ENCODE measurements at regions of chr2 and their contacts with region 1.

Region 1: GRCh38 chr2:176096986-176097819 is 2.4 kb upstream of the HOXD12 start:
- DNase-seq: peak; percentile 65 to 74 (median 71)
- H3K4me3 ChIP-seq: peak overlapping the region in 6 of 7 experiments; percentile 27 to 57 (median 52)
- H3K27ac ChIP-seq: no peak overlapping the region
- H3K4me1 ChIP-seq: peaks cover 7 to 23% (median 19%) of the 10 kb centered on the region in 4 experiments
- H3K27me3 ChIP-seq: peaks cover 34 to 99% (median 78%) of the 10 kb centered on the region in 5 experiments

Region 2: DNA sequence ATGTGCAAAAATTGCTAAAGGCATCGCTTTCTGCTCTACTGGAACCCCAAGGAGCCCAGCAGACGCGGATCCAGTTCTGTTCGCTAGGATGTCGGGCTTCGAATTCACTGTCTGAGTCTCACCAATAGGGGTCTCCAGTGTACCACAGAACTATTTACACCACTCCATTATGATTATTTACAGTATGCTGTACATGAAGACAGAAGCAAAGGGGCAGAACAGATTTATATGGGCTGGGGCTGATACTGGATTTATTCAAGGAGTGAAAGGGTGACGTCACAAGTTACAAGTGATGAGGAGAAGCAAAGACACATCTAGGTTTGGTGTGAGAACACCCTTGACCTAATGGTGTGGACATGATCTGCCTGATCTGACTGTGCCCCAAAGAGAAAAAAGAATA is 730.4 kb before region 1 on chr2:
- CTCF ChIA-PET with region 1: interaction called, 19 read pairs
- POLR2A ChIA-PET with region 1: no interaction called
- DNase-seq: peak; percentile 65 to 84 (median 81)
- H3K4me3 ChIP-seq: no peak overlapping the region
- H3K27ac ChIP-seq: no peak overlapping the region
- H3K4me1 ChIP-seq: peaks cover 2 to 11% (median 7%) of the 10 kb centered on the region in 4 experiments
- H3K27me3 ChIP-seq: peaks cover 3 to 52% (median 25%) of the 10 kb centered on the region in 5 experiments

Region 3: DNA sequence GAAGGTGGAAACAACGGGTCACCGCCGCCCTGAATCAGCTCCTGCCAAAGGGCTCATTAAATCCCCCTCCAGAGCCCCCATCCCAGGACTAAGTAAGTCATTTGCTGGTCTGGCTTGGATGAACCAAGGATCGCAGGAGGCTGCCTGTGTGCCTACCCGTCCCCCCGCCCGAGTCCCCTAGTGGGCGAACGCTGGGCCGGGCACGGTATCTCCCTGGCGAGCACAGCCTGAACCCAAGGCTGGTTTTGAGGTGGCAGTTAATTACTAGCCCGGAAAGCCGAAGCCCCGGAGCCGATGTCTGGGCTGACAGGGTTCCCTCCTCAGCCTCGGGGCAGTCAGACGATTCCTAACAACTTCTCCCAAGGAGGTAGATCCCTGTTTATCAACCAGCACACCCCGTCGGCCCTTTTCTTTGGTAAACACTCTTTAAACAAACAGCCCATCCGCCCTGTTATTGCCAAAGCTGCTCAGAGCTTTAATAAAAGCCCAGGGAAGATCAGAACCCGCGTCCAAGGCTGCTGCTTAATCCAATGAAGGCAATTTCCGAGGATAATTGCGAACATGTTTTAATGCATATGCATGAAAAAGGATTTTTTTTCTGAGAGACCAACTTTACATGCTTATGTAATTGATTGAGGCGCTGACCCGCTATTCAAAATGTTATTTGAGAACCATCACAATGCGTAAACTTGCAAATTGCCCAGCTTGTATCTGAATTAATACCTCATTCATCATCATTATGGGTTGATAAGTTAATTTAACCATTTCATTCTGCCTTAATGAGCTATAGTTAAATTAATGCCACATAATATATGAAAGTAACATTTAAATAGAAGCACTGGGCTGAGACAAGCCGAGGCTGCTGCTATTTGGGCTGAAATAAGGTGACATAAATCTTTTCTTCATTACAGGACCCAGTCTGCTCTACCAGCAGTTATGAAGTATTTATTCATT is 24.0 kb before region 1 on chr2:
- CTCF ChIA-PET with region 1: interaction called, 20 read pairs
- POLR2A ChIA-PET with region 1: interaction called, 3 read pairs
- DNase-seq: peak in 1 of 3 donors; percentile 25
- H3K4me3 ChIP-seq: no peak overlapping the region
- H3K27ac ChIP-seq: no peak overlapping the region
- H3K4me1 ChIP-seq: peaks cover 0 to 5% (median 2%) of the 10 kb centered on the region in 4 experiments
- H3K27me3 ChIP-seq: peaks cover 33 to 97% (median 70%) of the 10 kb centered on the region in 5 experiments

Region 4: DNA sequence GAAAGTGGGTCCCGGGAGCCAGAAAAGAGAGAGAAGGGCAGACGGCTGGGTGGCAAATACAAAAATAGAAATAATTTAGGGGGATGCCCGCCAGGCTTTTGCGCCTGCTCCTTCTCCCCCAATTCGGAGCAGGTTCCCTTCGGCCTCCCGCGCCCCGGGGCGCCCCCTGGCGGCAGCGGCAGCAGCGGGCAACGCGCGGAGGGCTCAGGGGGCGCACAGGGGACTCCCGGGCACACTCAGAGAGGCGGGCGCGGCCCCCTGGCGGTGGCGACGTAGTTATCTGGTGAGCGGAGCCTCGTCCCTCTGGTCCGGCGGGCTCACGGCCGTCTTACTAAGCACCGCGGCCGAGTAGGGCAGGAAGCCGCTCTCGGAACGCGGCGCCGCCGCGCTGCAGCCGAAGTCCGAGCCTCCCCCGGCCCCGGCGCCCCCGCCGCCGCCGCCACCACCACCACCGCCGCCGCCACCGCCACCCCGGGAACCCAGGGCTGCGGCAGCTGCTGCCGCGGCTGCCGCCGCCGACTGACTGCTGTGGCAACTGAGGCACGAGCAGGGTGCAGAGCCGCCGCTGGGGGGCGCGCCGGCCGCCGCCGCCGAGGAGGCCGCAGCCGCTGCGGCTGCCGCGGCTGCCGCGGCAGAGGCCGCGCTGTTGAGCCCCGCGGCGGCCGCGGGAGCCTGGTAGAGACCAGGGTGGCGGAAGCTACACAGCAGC is 17.2 kb before region 1 on chr2:
- CTCF ChIA-PET with region 1: interaction called, 20 read pairs
- POLR2A ChIA-PET with region 1: interaction called, 3 read pairs
- DNase-seq: peak; percentile 72 to 80 (median 78)
- H3K4me3 ChIP-seq: peak overlapping the region in 2 of 7 experiments; percentile 4 to 40
- H3K27ac ChIP-seq: no peak overlapping the region
- H3K4me1 ChIP-seq: peaks cover 0 to 15% (median 9%) of the 10 kb centered on the region in 4 experiments
- H3K27me3 ChIP-seq: peaks cover 47 to 96% (median 74%) of the 10 kb centered on the region in 5 experiments

Region 5: GRCh38 chr2:176110975-176111663 is 13.9 kb after region 1 on chr2:
- CTCF ChIA-PET with region 1: interaction called, 27 read pairs
- POLR2A ChIA-PET with region 1: interaction called, 4 read pairs
- DNase-seq: peak; percentile 62 to 66 (median 65)
- H3K4me3 ChIP-seq: no peak overlapping the region
- H3K27ac ChIP-seq: no peak overlapping the region
- H3K4me1 ChIP-seq: peaks cover 0 to 10% (median 6%) of the 10 kb centered on the region in 4 experiments
- H3K27me3 ChIP-seq: peaks cover 29 to 99% (median 70%) of the 10 kb centered on the region in 5 experiments